CD8-positive, alpha-beta T cell (primary cell): ENCODE measurements at regions of chr2 and their contacts with region 1.

Region 1: DNA sequence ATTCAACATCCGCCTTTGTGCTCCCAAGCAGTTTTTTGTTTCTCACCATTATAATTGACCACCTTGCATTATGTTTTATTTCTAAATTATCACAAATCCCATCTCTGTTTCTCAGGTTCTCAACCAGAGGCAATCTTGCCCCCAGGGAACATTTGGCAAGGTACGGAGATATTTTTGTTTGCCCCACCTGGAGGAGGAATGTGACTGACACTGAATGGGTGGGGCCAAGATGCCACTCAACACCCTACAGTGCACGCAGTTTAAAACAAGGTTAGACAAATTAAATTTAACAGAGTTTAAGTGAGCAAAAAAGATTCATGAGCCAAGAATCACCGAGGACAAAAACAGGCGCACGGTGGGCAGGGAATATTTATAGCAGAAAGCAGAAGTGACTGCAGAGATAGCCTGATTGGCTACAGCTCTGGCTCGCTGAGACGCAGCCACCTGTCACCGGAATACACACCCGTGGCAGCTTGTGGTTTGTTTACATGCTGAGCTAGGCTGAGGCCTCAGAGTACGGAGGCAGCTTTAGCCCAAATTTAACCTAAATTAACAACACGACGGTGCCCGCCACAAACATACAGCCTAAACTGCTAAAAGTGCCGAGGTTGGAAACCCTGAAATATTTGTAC is 150.0 kb upstream of the ALKAL2 start:
- DNase-seq: peak; percentile 53 to 92 (median 72)
- ATAC-seq: peak; percentile 99
- H3K4me3 ChIP-seq: peak overlapping the region; percentile 36 to 40
- H3K4me3 Mint-ChIP-seq: peak overlapping the region; percentile 78
- H3K27ac ChIP-seq: peak overlapping the region; percentile 57 to 72
- H3K27ac Mint-ChIP-seq: peak overlapping the region; percentile 96
- H3K4me1 ChIP-seq: peaks cover 14% of the 10 kb centered on the region
- H3K4me1 Mint-ChIP-seq: peaks cover 59% of the 10 kb centered on the region
- H3K27me3 ChIP-seq: no peaks in the 10 kb centered on the region
- H3K27me3 Mint-ChIP-seq: no peaks in the 10 kb centered on the region
- CTCF ChIP-seq: no peak

Region 2: DNA sequence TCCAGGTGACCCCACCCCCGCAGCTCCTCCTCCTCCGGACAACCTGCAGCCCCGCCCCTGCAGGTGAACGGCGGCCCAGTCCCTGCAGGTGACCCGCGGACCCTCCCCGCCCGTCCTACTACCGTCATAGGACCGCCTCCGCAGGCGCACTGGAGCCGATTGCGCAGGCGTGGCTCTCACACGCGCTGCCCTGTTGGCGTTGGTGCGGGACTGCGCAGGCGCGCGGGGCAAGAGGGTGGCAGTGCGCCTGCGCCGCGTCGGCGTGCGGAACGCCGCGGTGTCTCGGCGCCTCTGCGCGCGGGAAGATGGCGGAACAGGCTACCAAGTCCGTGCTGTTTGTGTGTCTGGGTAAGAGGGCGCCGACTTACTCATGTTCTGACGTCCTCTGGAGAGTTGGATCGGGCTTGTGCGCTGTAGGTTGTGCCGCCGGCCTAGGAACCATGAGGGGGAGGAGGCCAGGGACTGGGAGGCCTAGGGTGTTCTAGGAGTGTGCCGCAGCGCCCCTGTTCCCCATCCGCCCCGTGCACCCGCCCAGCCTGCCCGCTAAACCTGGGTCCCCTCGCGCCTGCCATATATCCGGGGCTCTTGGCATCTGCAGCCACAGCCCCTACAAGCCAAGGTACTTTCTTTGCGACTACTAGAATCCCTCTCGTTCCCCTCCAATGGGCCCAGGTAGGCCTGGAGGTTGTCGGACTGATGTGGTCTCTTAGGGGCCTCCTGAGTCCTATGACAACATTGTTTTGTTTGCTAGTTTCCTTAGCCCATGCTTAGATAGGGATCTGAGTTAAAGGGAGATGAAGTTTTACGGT is 173.0 kb before region 1 on chr2 and contains the start of gene ACP1:
- CTCF ChIA-PET with region 1: no interaction called
- POLR2A ChIA-PET with region 1: no interaction called
- intact Hi-C with region 1: loop called (anchors 5 to 10 kb)
- DNase-seq: peak; percentile 89 to 99 (median 95)
- ATAC-seq: peak; percentile 77
- H3K4me3 ChIP-seq: peak within 1 kb of the TSS; percentile 84 to 95
- H3K4me3 Mint-ChIP-seq: peak within 1 kb of the TSS; percentile 92
- H3K27ac ChIP-seq: peak within 1 kb of the TSS; percentile 92 to 95
- H3K27ac Mint-ChIP-seq: peak within 1 kb of the TSS; percentile 98
- H3K4me1 ChIP-seq: peaks cover 24% of the 10 kb centered on the region
- H3K4me1 Mint-ChIP-seq: peaks cover 68% of the 10 kb centered on the region
- H3K27me3 ChIP-seq: no peaks in the 10 kb centered on the region
- H3K27me3 Mint-ChIP-seq: no peaks in the 10 kb centered on the region
- CTCF ChIP-seq: no peak
- total RNA-seq, gene ACP1: 94.1 to 103 TPM

Region 3: DNA sequence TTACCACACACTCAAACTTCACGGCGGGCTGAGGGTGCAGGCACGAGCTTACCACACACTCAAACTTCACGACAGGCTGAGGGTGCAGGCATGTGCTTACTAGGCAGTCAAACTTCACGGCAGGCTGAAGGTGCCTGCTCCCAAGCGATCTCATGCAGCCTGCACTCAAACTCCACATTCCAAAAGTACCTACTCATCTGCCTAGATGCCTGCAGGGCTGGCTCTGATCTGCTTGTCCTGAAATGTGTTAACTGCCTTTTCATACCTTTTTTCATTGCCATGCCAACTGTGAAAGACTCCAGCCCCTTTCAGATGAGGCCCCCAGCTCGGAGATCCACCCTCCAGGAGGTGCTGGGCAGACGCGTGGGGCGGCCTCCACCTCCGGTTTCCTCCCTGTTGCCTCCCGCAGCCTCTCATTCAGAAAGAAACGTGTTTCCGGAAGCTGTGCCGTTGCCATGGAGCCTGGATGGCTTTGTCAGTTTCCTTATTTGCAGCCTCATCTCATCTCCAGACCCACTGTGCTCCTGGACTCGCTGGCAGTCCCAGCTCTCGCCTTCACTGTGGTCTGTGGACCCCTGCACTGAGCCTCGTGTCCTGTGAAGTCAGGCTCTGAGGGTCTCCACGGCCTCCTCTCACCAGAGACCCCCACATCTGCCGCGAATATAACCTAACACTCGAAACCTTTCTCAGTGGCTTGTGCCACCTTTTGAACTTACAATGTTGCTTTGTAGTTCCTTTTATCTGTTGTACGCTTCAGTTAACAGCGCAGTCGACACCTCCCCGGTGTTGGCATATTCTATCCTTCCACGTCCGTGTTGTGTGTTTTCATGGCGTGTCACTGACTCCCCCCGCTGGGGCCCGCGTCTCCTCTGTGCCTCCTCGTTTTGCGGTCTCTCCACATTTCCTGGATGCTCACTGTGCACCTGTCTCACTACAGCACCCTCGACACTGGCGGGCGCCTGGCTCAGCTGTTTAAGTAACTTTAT is 43.9 kb before region 1 on chr2:
- CTCF ChIA-PET with region 1: no interaction called
- POLR2A ChIA-PET with region 1: no interaction called
- intact Hi-C with region 1: loop called (anchors 5 kb)
- DNase-seq: peak; percentile 31 to 85 (median 71)
- ATAC-seq: peak; percentile 82
- H3K4me3 ChIP-seq: peak overlapping the region; percentile 33 to 36
- H3K4me3 Mint-ChIP-seq: peak overlapping the region; percentile 88
- H3K27ac ChIP-seq: peak overlapping the region; percentile 28 to 69
- H3K27ac Mint-ChIP-seq: peak overlapping the region; percentile 96
- H3K4me1 ChIP-seq: peaks cover 24% of the 10 kb centered on the region
- H3K4me1 Mint-ChIP-seq: peaks cover 23% of the 10 kb centered on the region
- H3K27me3 ChIP-seq: no peaks in the 10 kb centered on the region
- H3K27me3 Mint-ChIP-seq: no peaks in the 10 kb centered on the region
- CTCF ChIP-seq: no peak

Region 4: DNA sequence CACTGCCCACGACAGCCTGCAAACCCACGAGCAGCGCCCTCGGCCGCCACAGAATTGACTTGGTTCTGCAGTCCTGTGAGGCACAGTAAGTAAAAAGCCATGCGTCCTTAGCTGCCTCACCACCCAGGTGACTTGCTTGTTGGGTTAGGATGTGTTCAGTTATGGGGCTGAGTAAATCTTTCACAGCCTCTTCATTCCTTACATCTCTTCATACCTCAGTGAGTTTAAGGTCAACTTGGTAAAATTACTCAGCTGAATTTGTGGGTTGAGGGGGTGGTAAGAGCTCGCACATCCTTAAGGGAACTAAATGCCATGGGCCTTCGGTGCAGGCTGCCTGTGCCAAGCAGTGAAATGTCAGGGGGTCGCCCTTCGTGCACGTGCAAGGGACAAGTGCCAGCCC is 15.3 kb after region 1 on chr2:
- CTCF ChIA-PET with region 1: interaction called, 3 read pairs
- POLR2A ChIA-PET with region 1: interaction called, 5 read pairs
- intact Hi-C with region 1: loop called in 1 of 2 experiments (anchors 1 kb)
- DNase-seq: no peak
- ATAC-seq: no peak
- H3K4me3 ChIP-seq: no peak overlapping the region
- H3K4me3 Mint-ChIP-seq: no peak overlapping the region
- H3K27ac ChIP-seq: no peak overlapping the region
- H3K27ac Mint-ChIP-seq: no peak overlapping the region
- H3K4me1 ChIP-seq: peaks cover 15% of the 10 kb centered on the region
- H3K4me1 Mint-ChIP-seq: peaks cover 39% of the 10 kb centered on the region
- H3K27me3 ChIP-seq: peaks cover 0 to 4% of the 10 kb centered on the region in 2 experiments
- H3K27me3 Mint-ChIP-seq: peaks cover 7% of the 10 kb centered on the region
- CTCF ChIP-seq: no peak

Region 5: GRCh38 chr2:460861-461260 is 23.0 kb after region 1 on chr2:
- CTCF ChIA-PET with region 1: no interaction called
- POLR2A ChIA-PET with region 1: interaction called, 4 read pairs
- intact Hi-C with region 1: loop called in 1 of 2 experiments (anchors 2 kb)
- DNase-seq: peak; percentile 29 to 89 (median 64)
- ATAC-seq: peak; percentile 78
- H3K4me3 ChIP-seq: peak overlapping the region in 1 of 2 experiments; percentile 19
- H3K4me3 Mint-ChIP-seq: peak overlapping the region; percentile 75
- H3K27ac ChIP-seq: no peak overlapping the region
- H3K27ac Mint-ChIP-seq: peak overlapping the region; percentile 28
- H3K4me1 ChIP-seq: peaks cover 22% of the 10 kb centered on the region
- H3K4me1 Mint-ChIP-seq: peaks cover 49% of the 10 kb centered on the region
- H3K27me3 ChIP-seq: peaks cover 3 to 4% of the 10 kb centered on the region in 2 experiments
- H3K27me3 Mint-ChIP-seq: peaks cover 31% of the 10 kb centered on the region
- CTCF ChIP-seq: no peak

Region 6: GRCh38 chr2:677056-677965 is 239.4 kb after region 1 on chr2 and contains the start of gene TMEM18:
- CTCF ChIA-PET with region 1: no interaction called
- POLR2A ChIA-PET with region 1: no interaction called
- intact Hi-C with region 1: loop called (anchors 2 to 10 kb)
- DNase-seq: peak in 7 of 9 experiments; percentile 80 to 99 (median 98)
- ATAC-seq: peak; percentile 82
- H3K4me3 ChIP-seq: peak within 1 kb of the TSS; percentile 90 to 95
- H3K4me3 Mint-ChIP-seq: peak within 1 kb of the TSS; percentile 95
- H3K27ac ChIP-seq: peak within 1 kb of the TSS; percentile 96 to 100
- H3K27ac Mint-ChIP-seq: peak within 1 kb of the TSS; percentile 99
- H3K4me1 ChIP-seq: peaks cover 19% of the 10 kb centered on the region
- H3K4me1 Mint-ChIP-seq: peaks cover 42% of the 10 kb centered on the region
- H3K27me3 ChIP-seq: no peaks in the 10 kb centered on the region
- H3K27me3 Mint-ChIP-seq: no peaks in the 10 kb centered on the region
- CTCF ChIP-seq: peak; percentile 38
- total RNA-seq, gene TMEM18: 30.7 to 33.6 TPM